AG04450 (cell line): ENCODE measurements at regions of chr15 and their contacts with region 1.

Region 1: DNA sequence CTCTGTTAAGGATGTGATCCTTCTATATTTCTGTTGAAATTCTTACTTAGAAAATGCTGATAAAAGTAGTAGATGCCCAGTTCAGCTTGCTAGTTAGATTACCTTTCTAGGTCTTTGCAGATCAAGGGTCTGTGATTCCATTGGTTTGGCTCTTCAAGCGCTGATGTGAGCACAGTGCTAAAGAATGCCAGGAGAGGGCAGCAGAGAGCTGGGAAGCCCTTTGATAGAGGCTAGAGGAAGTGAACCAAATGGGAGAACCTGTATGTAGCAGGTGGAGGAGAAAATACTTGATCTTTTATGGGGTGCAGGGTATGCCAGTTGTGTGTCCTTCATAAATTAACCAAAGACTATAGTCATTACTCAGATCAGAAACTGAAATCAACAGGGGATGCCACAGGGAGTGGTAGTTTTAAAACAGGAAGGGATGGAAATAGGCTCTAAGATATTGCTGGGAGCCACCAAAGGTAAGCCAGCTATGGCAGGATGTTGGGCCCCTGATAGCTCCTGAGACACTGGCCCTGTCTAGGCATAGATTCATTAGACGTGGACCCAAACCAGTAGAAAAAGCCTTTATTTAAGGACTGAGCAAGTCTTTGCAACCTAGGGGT is 677.4 kb downstream of the SQOR start:
- DNase-seq: peak; percentile 2
- H3K4me3 ChIP-seq: no peak overlapping the region
- H3K27ac ChIP-seq: no peak overlapping the region
- H3K27me3 ChIP-seq: no peaks in the 10 kb centered on the region
- CTCF ChIP-seq: peak; percentile 92

Region 2: DNA sequence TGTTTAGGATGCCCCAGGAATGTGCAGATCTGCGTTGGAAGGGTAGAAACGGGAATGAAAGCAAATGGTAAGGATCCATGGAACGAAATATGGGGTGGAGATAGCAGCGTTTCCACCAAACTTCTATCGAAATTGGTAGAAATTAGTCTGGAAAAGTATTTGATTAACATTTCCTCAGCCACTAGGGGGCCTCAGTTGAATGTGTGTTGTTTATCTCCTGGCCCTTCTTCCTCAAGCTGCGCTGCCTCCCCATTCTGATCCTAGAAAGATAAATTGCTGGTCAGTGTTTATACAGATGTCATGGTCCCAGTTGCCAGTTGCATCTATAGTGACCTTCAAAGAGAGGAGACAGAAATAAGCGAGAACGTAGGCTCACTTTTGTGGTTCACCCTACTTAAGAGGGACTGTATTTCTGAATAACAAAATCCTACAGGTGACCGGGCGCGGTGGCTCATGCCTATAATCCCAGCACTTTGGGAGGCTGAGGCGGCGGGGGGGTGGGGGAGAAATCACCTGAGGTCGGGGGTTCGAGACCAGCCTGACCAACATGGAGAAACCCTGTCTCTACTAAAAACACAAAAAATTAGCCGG is 220.3 kb before region 1 on chr15:
- CTCF ChIA-PET with region 1: interaction called, 16 read pairs
- POLR2A ChIA-PET with region 1: no interaction called
- DNase-seq: peak; percentile 4
- H3K4me3 ChIP-seq: no peak overlapping the region
- H3K27ac ChIP-seq: no peak overlapping the region
- H3K27me3 ChIP-seq: no peaks in the 10 kb centered on the region
- CTCF ChIP-seq: peak; percentile 63

Region 3: GRCh38 chr15:46260937-46261336 is 51.3 kb before region 1 on chr15:
- CTCF ChIA-PET with region 1: no interaction called
- POLR2A ChIA-PET with region 1: no interaction called
- DNase-seq: no peak
- H3K4me3 ChIP-seq: no peak overlapping the region
- H3K27ac ChIP-seq: no peak overlapping the region
- H3K27me3 ChIP-seq: no peaks in the 10 kb centered on the region
- CTCF ChIP-seq: 0 out of 2 replicates have a peak, but pooled peaks have one; percentile 18

Region 4: DNA sequence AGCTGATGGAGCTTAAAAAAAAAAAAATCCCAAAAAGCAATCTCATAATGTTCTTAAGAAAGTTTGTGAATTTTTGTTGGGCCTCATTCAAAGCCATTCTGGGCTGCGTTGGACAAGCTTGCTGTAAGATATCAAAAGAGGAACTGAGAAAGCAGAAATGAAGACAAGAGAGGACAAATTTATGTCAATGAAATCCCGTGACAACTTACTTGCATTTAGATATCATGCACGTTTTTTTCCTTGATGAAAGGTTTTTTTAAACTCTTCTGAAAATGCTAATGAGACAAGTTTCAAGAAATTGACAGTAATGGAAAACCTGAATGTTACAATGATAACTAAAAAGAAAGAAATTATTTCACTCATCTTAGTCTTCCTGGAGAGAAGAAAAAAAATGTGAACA is 14.5 kb before region 1 on chr15:
- CTCF ChIA-PET with region 1: interaction called, 26 read pairs
- POLR2A ChIA-PET with region 1: no interaction called
- DNase-seq: no peak
- H3K4me3 ChIP-seq: no peak overlapping the region
- H3K27ac ChIP-seq: no peak overlapping the region
- H3K27me3 ChIP-seq: no peaks in the 10 kb centered on the region
- CTCF ChIP-seq: no peak

Region 5: GRCh38 chr15:46322753-46323152 is 10.5 kb after region 1 on chr15:
- CTCF ChIA-PET with region 1: interaction called, 10 read pairs
- POLR2A ChIA-PET with region 1: no interaction called
- DNase-seq: no peak
- H3K4me3 ChIP-seq: no peak overlapping the region
- H3K27ac ChIP-seq: no peak overlapping the region
- H3K27me3 ChIP-seq: no peaks in the 10 kb centered on the region
- CTCF ChIP-seq: no peak